Mammary epithelial cell (primary cell): ENCODE measurements at regions of chr16 and their contacts with region 1.

Region 1: DNA sequence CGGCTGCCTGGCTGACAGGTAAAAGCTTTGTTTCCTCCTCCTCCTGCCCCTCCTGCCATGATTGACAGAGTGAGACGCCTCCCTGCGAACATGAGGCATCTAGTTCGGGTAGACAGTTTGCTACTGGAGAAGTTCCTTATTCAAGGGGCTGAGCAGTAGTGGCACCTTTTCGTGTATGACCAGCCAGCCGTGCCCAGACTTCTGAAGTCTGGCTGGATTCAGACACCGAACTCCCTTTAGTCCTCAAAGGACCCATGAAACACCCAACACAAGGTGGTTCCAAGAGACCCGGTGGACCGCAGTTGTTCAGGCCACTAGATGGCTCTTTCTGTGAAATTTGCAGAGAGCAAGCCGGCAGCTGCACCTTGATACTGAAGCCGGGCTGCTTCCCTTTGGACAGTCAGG is 192.8 kb downstream of the XYLT1 start:
- DNase-seq: no peak
- H3K4me3 ChIP-seq: no peak overlapping the region
- H3K27ac ChIP-seq: no peak overlapping the region
- H3K4me1 ChIP-seq: peaks cover 10% of the 10 kb centered on the region
- H3K27me3 ChIP-seq: no peaks in the 10 kb centered on the region
- CTCF ChIP-seq: peak in 1 of 2 donors; percentile 37

Region 2: GRCh38 chr16:17224879-17225281 is 53.1 kb before region 1 on chr16:
- CTCF ChIA-PET with region 1: no interaction called
- dilution Hi-C with region 1: no loop called
- in situ Hi-C with region 1: no loop called
- intact Hi-C with region 1: loop called (anchors 5 kb)
- DNase-seq: peak; percentile 29
- H3K4me3 ChIP-seq: no peak overlapping the region
- H3K27ac ChIP-seq: no peak overlapping the region
- H3K4me1 ChIP-seq: peaks cover 13% of the 10 kb centered on the region
- H3K27me3 ChIP-seq: no peaks in the 10 kb centered on the region
- CTCF ChIP-seq: no peak

Region 3: GRCh38 chr16:17318238-17318637 is 40.3 kb after region 1 on chr16:
- CTCF ChIA-PET with region 1: no interaction called
- dilution Hi-C with region 1: no loop called
- in situ Hi-C with region 1: no loop called
- intact Hi-C with region 1: loop called (anchors 5 kb)
- DNase-seq: no peak
- H3K4me3 ChIP-seq: no peak overlapping the region
- H3K27ac ChIP-seq: no peak overlapping the region
- H3K4me1 ChIP-seq: peaks cover 5% of the 10 kb centered on the region
- H3K27me3 ChIP-seq: no peaks in the 10 kb centered on the region
- CTCF ChIP-seq: no peak

Region 4: GRCh38 chr16:17369421-17370222 is 91.6 kb after region 1 on chr16:
- CTCF ChIA-PET with region 1: no interaction called
- dilution Hi-C with region 1: no loop called
- in situ Hi-C with region 1: no loop called
- intact Hi-C with region 1: loop called (anchors 10 kb)
- DNase-seq: no peak
- H3K4me3 ChIP-seq: no peak overlapping the region
- H3K27ac ChIP-seq: no peak overlapping the region
- H3K4me1 ChIP-seq: no peaks in the 10 kb centered on the region
- H3K27me3 ChIP-seq: no peaks in the 10 kb centered on the region
- CTCF ChIP-seq: no peak

Region 5: GRCh38 chr16:17578921-17579874 is 301.2 kb after region 1 on chr16:
- CTCF ChIA-PET with region 1: no interaction called
- dilution Hi-C with region 1: no loop called
- in situ Hi-C with region 1: no loop called
- intact Hi-C with region 1: loop called (anchors 10 kb)
- DNase-seq: peak; percentile 60
- H3K4me3 ChIP-seq: no peak overlapping the region
- H3K27ac ChIP-seq: no peak overlapping the region
- H3K4me1 ChIP-seq: peaks cover 9% of the 10 kb centered on the region
- H3K27me3 ChIP-seq: no peaks in the 10 kb centered on the region
- CTCF ChIP-seq: peak; percentile 94 to 96